ENCODE measurements at regions of chr18 and their contacts with region 1.

Region 1: GRCh38 chr18:70082430-70082829 is 123.1 kb downstream of the RTTN start:
- DNase-seq: no peak
- ATAC-seq: no peak
- H3K4me3 ChIP-seq: no peak overlapping the region
- H3K27ac ChIP-seq: no peak overlapping the region
- H3K4me1 ChIP-seq: peaks cover 0 to 4% (median 0%) of the 10 kb centered on the region in 12 donors
- H3K27me3 ChIP-seq: no peaks in the 10 kb centered on the region
- CTCF ChIP-seq: no peak
- POLR2A ChIP-seq: no peak

Region 2: DNA sequence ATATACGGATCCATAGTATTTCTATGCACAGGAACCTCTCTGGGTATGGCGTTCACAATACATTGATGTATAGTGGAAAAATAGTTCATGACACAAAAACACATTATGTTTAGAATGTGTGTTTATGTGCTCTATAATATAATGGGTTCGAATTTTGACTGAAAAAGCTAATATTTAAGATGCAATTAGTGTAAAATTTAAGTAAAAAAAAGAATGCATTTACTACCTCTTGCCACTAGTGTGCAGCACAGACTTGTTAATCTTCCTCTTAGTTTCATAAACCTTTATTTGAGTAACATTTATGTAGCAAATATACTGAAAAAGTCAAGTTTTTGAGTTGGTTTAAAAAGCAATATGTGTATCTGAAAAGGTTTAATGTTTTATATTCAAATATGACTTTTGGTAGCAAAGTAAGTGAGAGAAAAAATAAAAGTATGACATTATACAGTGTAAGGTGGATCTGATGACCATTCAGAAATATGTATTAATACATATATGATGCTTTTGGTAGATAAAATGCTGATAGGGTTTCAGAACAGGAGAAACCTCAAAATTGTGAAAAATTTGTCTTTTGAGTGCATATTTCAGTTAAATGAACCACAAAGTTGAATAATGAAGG is 1235.1 kb before region 1 on chr18:
- intact Hi-C with region 1: loop called in 9 of 10 experiments (anchors 5 to 10 kb)
- DNase-seq: no peak
- ATAC-seq: no peak
- H3K4me3 ChIP-seq: no peak overlapping the region
- H3K27ac ChIP-seq: no peak overlapping the region
- H3K4me1 ChIP-seq: no peaks in the 10 kb centered on the region
- H3K27me3 ChIP-seq: no peaks in the 10 kb centered on the region
- CTCF ChIP-seq: peak; percentile 49 to 82 (median 65)
- POLR2A ChIP-seq: no peak

Region 3: GRCh38 chr18:68854786-68855391 is 1227.5 kb before region 1 on chr18:
- intact Hi-C with region 1: loop called in 1 of 10 experiments (anchors 5 kb)
- DNase-seq: no peak
- ATAC-seq: no peak
- H3K4me3 ChIP-seq: peak overlapping the region in 1 of 12 donors; percentile 16
- H3K27ac ChIP-seq: no peak overlapping the region
- H3K4me1 ChIP-seq: no peaks in the 10 kb centered on the region
- H3K27me3 ChIP-seq: no peaks in the 10 kb centered on the region
- CTCF ChIP-seq: no peak
- POLR2A ChIP-seq: no peak

Region 4: DNA sequence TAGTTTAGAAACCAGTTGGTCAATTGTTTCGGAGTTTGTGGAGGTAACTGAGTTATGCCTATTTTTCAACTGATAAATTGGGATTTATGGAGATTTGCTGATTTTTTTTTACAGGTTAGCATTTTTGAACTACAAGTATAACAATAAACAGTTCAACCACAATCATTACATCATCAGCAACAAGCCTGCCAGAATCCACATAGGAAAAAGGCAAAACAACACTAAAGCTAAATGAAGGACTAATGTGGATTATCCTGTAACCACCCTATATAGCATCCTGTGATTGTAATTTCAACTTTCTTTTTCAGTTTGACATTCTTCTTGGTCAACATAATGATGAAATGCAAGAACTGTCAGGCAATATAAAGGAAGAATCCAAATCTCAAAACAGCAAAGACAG is 1208.1 kb before region 1 on chr18:
- intact Hi-C with region 1: loop called in 1 of 10 experiments (anchors 10 kb)
- DNase-seq: no peak
- ATAC-seq: no peak
- H3K4me3 ChIP-seq: no peak overlapping the region
- H3K27ac ChIP-seq: no peak overlapping the region
- H3K4me1 ChIP-seq: no peaks in the 10 kb centered on the region
- H3K27me3 ChIP-seq: no peaks in the 10 kb centered on the region
- CTCF ChIP-seq: no peak
- POLR2A ChIP-seq: no peak

Region 5: GRCh38 chr18:69636529-69637301 is 445.7 kb before region 1 on chr18:
- intact Hi-C with region 1: loop called in 7 of 10 experiments (anchors 5 to 10 kb)
- DNase-seq: no peak
- ATAC-seq: peak; percentile 68 to 84 (median 73)
- H3K4me3 ChIP-seq: no peak overlapping the region
- H3K27ac ChIP-seq: no peak overlapping the region
- H3K4me1 ChIP-seq: no peaks in the 10 kb centered on the region
- H3K27me3 ChIP-seq: no peaks in the 10 kb centered on the region
- CTCF ChIP-seq: peak in 11 of 12 donors; percentile 6 to 51 (median 36)
- POLR2A ChIP-seq: no peak

Region 6: GRCh38 chr18:69978732-69979715 is 103.4 kb before region 1 on chr18:
- intact Hi-C with region 1: no loop called
- DNase-seq: no peak
- ATAC-seq: no peak
- H3K4me3 ChIP-seq: no peak overlapping the region
- H3K27ac ChIP-seq: no peak overlapping the region
- H3K4me1 ChIP-seq: peaks cover 0 to 13% (median 0%) of the 10 kb centered on the region in 12 donors
- H3K27me3 ChIP-seq: no peaks in the 10 kb centered on the region
- CTCF ChIP-seq: no peak
- POLR2A ChIP-seq: no peak

Measured in heart left ventricle (tissue), 16 donors.